Calu3 (cell line): ENCODE measurements at regions of chr20 and their contacts with region 1.

Region 1: GRCh38 chr20:56420028-56420427 is 8.0 kb downstream of the CASS4 start:
- DNase-seq: no peak
- H3K4me3 Mint-ChIP-seq: no peak overlapping the region
- H3K27ac Mint-ChIP-seq: no peak overlapping the region
- H3K4me1 Mint-ChIP-seq: peaks cover 13% of the 10 kb centered on the region
- H3K27me3 Mint-ChIP-seq: no peaks in the 10 kb centered on the region
- CTCF ChIP-seq: no peak

Region 2: GRCh38 chr20:56343861-56344381 is 76.1 kb before region 1 on chr20:
- CTCF ChIA-PET with region 1: no interaction called
- intact Hi-C with region 1: no loop called
- DNase-seq: peak; percentile 73
- H3K4me3 Mint-ChIP-seq: peak overlapping the region; percentile 43
- H3K27ac Mint-ChIP-seq: no peak overlapping the region
- H3K4me1 Mint-ChIP-seq: peaks cover 12% of the 10 kb centered on the region
- H3K27me3 Mint-ChIP-seq: peaks cover 73% of the 10 kb centered on the region
- CTCF ChIP-seq: peak; percentile 72

Region 3: DNA sequence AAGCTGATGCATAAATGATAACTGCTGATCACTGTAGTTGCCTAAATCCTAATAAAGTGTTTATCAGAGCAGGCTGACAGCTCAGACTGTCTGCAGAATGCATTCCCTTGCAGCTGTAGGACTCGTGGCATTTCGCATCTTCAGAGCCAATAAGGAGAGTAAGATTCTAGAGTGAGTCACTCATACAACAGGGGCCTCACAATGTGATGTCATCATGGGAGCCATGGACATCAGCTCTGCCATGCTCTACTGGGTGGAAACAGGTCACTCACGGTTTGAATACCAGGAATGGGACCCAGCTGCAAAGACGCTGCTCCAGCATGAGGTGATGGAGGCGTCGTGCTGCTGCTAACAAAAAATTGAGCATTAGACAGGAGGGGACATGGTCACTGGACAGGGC is 120.4 kb after region 1 on chr20:
- CTCF ChIA-PET with region 1: no interaction called
- intact Hi-C with region 1: no loop called
- DNase-seq: no peak
- H3K4me3 Mint-ChIP-seq: no peak overlapping the region
- H3K27ac Mint-ChIP-seq: no peak overlapping the region
- H3K4me1 Mint-ChIP-seq: no peaks in the 10 kb centered on the region
- H3K27me3 Mint-ChIP-seq: no peaks in the 10 kb centered on the region
- CTCF ChIP-seq: no peak

Region 4: GRCh38 chr20:57062241-57062640 is 642.2 kb after region 1 on chr20:
- CTCF ChIA-PET with region 1: interaction called, 12 read pairs
- intact Hi-C with region 1: no loop called
- DNase-seq: no peak
- H3K4me3 Mint-ChIP-seq: no peak overlapping the region
- H3K27ac Mint-ChIP-seq: no peak overlapping the region
- H3K4me1 Mint-ChIP-seq: no peaks in the 10 kb centered on the region
- H3K27me3 Mint-ChIP-seq: no peaks in the 10 kb centered on the region
- CTCF ChIP-seq: no peak